Right ventricle myocardium superior (tissue), 1 donor: ENCODE measurements at regions of chr6 and their contacts with region 1.

Region 1: GRCh38 chr6:12289933-12290820 is at the start of gene EDN1:
- DNase-seq: peak; percentile 85
- ATAC-seq: peak; percentile 95
- total RNA-seq, gene EDN1: 2.2 TPM

Region 2: DNA sequence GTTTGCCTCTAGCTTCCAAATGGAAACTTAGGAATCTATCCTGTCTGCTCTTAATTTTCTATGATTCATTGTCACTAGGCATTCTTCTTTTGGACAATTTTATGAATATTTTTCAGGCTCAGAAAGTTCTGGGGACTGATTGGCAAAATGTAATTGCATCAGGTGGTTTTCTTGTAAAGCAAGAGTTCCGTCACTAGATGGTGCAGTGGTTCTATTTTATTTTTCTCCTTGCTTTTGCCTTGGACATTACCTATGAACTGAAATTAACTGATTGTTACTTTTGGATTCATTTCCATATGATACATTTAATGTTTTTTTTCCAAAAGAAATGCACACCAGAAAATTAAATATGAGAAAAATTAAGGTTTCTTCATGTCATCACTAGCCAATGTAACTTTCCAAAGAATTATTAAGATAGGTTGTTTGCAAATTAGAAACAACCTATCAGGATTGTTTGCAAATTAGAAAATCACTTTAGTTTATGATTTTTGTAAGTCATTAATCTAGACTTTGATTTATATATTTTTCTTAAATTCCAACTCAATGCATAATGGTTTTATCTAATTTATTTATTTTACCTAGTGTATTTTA is 704.7 kb before region 1 on chr6:
- intact Hi-C with region 1: loop called (anchors 5 kb)
- DNase-seq: no peak
- ATAC-seq: no peak

Region 3: DNA sequence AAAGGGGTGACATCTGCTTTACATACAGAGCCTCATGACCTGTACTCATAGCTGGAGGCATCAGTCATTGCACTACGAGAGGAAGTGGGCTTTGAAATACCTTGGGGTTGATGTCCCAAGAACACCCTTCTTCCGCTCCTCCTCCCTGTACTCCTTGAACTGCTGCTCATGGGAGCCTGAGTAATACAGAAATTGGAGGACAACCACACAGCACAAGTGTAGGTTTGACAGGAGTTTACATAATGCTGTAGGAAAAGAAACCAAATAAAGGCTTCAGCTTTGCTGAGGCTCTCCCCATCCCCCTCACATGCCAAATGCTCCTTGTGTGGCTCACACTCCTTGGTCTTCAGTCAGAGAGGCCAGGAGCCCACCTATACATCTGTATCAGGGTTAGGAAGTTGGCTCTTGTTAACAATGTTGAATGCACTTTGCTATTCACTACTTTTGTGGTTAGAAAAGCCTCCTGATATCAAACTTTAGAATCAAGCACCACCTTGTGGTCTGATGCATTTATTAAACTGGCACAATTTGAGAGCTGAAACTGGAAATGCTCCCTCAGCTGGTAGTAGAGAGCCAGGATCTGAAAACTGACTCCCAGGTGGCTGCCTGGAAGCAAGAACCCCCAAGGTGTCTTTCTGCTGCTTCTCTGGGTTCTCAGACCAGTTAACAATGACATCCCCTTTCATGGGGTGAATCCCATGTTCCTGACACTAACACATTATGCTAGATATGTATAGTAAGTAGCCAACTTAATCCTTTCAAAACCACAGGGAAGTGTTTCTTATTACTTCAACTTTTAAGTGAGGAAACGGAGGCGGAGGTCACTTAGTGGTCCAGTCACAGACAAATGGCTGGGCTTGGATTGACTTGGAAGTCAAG is 56.2 kb before region 1 on chr6:
- intact Hi-C with region 1: no loop called
- DNase-seq: no peak
- ATAC-seq: peak; percentile 79

Region 4: DNA sequence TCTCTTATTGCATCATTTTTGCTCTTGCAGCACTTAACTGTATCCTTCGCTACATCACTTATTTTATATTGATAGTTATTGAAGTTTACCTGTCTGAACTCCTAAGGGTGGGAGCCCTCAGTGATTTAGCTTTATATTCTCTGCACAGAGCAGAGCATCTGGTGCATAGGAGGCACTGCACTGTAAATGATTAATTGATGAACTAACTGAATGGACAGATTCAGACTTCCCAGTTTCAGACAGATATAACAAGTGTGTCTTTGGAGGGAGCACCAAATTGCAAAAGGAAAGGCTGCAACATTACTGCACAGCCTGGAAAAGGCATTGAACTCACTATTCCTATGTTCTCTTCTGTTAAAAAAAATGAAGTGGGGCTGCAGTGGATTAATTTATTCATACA is 160.3 kb after region 1 on chr6:
- intact Hi-C with region 1: no loop called
- DNase-seq: no peak
- ATAC-seq: no peak